Naive thymus-derived CD4-positive, alpha-beta T cell (primary cell): ENCODE measurements at regions of chr3 and their contacts with region 1.

Region 1: DNA sequence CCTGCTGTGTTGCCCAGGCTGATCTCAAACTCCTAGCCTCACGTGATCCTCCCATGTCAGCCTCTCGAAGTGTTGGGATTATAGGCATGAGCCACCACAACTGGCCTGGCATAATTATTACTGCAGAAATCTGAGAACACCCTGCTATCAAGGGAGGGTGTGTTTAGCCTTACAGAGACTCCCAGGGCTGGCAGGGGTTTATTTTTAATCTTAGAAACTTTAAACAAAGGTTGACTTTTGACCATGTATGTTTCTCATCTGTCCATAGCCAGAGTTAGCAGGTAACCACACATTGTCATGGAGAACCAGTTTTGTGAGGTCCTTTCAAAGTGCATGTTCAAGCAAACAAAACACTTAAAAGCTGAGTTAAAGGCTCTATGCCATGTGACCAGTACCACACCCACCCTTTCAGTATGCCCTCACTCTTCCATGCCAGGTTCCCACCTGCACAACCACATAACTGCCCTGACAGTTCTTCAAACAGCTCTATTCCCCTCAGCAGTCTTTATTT is 11.2 kb downstream of the SIAH2 start:
- DNase-seq: no peak
- ATAC-seq: no peak
- H3K4me3 ChIP-seq: no peak overlapping the region
- H3K4me3 Mint-ChIP-seq: no peak overlapping the region
- H3K27ac ChIP-seq: no peak overlapping the region
- H3K27ac Mint-ChIP-seq: peak overlapping the region in 5 of 9 donors; percentile 7 to 71 (median 53)
- H3K4me1 ChIP-seq: peaks cover 1 to 10% of the 10 kb centered on the region in 2 donors
- H3K4me1 Mint-ChIP-seq: peaks cover 47 to 92% (median 78%) of the 10 kb centered on the region in 7 donors
- H3K27me3 ChIP-seq: no peaks in the 10 kb centered on the region
- H3K27me3 Mint-ChIP-seq: no peaks in the 10 kb centered on the region

Region 2: GRCh38 chr3:150737874-150738713 is 13.7 kb before region 1 on chr3:
- CTCF ChIA-PET with region 1: no interaction called
- POLR2A ChIA-PET with region 1: no interaction called
- intact Hi-C with region 1: loop called in 1 of 2 experiments (anchors 1 kb)
- DNase-seq: peak in 1 of 9 donors; percentile 49
- ATAC-seq: peak; percentile 41
- H3K4me3 ChIP-seq: no peak overlapping the region
- H3K4me3 Mint-ChIP-seq: peak overlapping the region in 1 of 10 donors; percentile 5
- H3K27ac ChIP-seq: no peak overlapping the region
- H3K27ac Mint-ChIP-seq: peak overlapping the region in 3 of 9 donors; percentile 33 to 59 (median 41)
- H3K4me1 ChIP-seq: peaks cover 0 to 5% of the 10 kb centered on the region in 2 donors
- H3K4me1 Mint-ChIP-seq: peaks cover 17 to 60% (median 49%) of the 10 kb centered on the region in 7 donors
- H3K27me3 ChIP-seq: no peaks in the 10 kb centered on the region
- H3K27me3 Mint-ChIP-seq: no peaks in the 10 kb centered on the region